HepG2 (cell line): ENCODE measurements at regions of chr20 and their contacts with region 1.

Region 1: DNA sequence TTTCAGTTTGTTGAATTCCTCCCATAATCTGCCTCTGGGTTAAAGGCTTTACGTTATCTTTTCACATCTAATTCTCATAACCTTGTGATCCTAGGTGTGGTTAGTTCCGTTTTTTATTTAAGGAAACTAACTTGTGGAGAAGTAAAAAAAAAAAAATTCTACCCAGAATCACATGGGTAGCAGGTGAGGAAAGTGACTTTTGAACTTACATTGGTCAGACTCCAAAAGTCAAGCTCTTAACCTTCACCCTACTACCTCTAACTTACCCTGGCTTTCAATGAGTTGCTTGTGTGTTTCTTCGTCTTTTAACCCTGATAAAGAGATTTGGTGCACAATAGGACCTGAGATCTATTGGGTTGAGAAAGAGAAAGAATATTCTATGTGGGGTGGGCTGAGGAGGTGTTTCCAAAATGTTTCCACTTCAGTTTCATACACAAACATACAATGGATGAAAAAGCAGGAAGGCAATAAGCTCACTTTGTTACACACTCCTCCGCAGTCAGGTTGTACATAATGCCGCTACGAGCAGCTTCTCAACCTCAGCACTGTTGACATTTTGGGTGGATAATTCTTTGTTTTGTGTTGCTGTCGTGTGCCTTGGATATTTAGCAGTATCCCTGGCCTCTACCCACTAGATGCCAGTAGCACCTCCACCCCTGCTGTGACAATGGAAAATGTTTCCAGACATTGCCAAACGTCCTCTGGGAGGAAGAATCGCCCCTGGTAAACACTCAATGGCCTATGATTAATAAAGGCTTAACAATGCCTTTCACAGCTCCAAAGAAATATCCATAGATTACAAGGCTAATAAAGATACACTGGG is 193.0 kb upstream of the ZNF217 start:
- DNase-seq: peak; percentile 56
- ATAC-seq: peak; percentile 77
- H3K4me3 ChIP-seq: peak overlapping the region; percentile 26 to 52 (median 27)
- H3K27ac ChIP-seq: peak overlapping the region; percentile 72
- H3K4me1 ChIP-seq: peaks cover 65% of the 10 kb centered on the region
- H3K27me3 ChIP-seq: no peaks in the 10 kb centered on the region
- CTCF ChIP-seq: peak; percentile 46
- EP300 ChIP-seq: peak in 1 of 2 experiments; percentile 82; a peak in 2 of 4 replicates
- POLR2A ChIP-seq: no peak
- RAD21 ChIP-seq: peak; percentile 40

Region 2: GRCh38 chr20:53513301-53514298 is 273.1 kb before region 1 on chr20:
- CTCF ChIA-PET with region 1: no interaction called
- POLR2A ChIA-PET with region 1: no interaction called
- in situ Hi-C with region 1: no loop called
- intact Hi-C with region 1: no loop called
- DNase-seq: peak; percentile 86
- ATAC-seq: peak; percentile 89
- H3K4me3 ChIP-seq: peak overlapping the region in 2 of 3 experiments; percentile 8 to 44; a peak in 4 of 6 replicates
- H3K27ac ChIP-seq: no peak overlapping the region
- H3K4me1 ChIP-seq: peaks cover 41% of the 10 kb centered on the region
- H3K27me3 ChIP-seq: peaks cover 0 to 6% of the 10 kb centered on the region in 2 experiments; a peak in 1 of 5 replicates
- CTCF ChIP-seq: no peak
- EP300 ChIP-seq: 0 out of 4 replicates have a peak, but pooled peaks of 1 of the 2 experiments have one; percentile 30
- POLR2A ChIP-seq: no peak
- RAD21 ChIP-seq: no peak

Region 3: GRCh38 chr20:53773792-53774401 is 12.8 kb before region 1 on chr20:
- CTCF ChIA-PET with region 1: no interaction called
- POLR2A ChIA-PET with region 1: interaction called, 27 read pairs
- in situ Hi-C with region 1: no loop called
- intact Hi-C with region 1: no loop called
- DNase-seq: peak; percentile 66
- ATAC-seq: peak; percentile 51
- H3K4me3 ChIP-seq: no peak overlapping the region
- H3K27ac ChIP-seq: peak overlapping the region; percentile 56
- H3K4me1 ChIP-seq: peaks cover 76% of the 10 kb centered on the region
- H3K27me3 ChIP-seq: no peaks in the 10 kb centered on the region
- CTCF ChIP-seq: no peak
- EP300 ChIP-seq: no peak
- POLR2A ChIP-seq: no peak
- RAD21 ChIP-seq: no peak